ENCODE measurements at regions of chr1 and their contacts with region 1.

Region 1: GRCh38 chr1:173420330-173420806 is 56.8 kb upstream of the PRDX6 start:
- DNase-seq: peak; percentile 78
- H3K4me3 Mint-ChIP-seq: peak overlapping the region; percentile 29
- H3K27ac Mint-ChIP-seq: no peak overlapping the region
- H3K4me1 Mint-ChIP-seq: peaks cover 33% of the 10 kb centered on the region
- H3K27me3 Mint-ChIP-seq: no peaks in the 10 kb centered on the region
- CTCF ChIP-seq: peak; percentile 87

Region 2: DNA sequence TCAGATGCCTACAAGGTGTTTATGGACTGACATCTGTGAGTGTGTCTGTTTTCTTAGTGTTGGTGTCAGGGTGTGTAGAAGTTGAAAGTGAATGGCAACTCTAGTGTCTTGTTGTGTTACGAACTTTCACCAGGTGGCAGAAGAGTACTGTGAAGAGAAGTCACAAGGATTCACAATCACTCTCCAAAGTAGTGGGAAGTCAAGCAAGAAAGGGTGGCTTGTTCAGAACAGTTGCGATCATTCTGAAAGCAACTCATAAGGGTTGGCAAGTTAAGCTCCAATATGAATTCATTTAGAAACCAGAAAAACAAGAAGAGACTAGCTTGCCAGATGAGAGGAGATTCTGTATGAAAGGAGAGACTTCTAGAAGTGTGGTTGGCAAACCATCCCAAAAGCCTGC is 675.4 kb before region 1 on chr1:
- CTCF ChIA-PET with region 1: interaction called, 3 read pairs
- intact Hi-C with region 1: loop called (anchors 2 kb)
- DNase-seq: peak; percentile 64
- H3K4me3 Mint-ChIP-seq: peak overlapping the region; percentile 17
- H3K27ac Mint-ChIP-seq: peak overlapping the region; percentile 80
- H3K4me1 Mint-ChIP-seq: peaks cover 33% of the 10 kb centered on the region
- H3K27me3 Mint-ChIP-seq: no peaks in the 10 kb centered on the region
- CTCF ChIP-seq: peak; percentile 66

Region 3: DNA sequence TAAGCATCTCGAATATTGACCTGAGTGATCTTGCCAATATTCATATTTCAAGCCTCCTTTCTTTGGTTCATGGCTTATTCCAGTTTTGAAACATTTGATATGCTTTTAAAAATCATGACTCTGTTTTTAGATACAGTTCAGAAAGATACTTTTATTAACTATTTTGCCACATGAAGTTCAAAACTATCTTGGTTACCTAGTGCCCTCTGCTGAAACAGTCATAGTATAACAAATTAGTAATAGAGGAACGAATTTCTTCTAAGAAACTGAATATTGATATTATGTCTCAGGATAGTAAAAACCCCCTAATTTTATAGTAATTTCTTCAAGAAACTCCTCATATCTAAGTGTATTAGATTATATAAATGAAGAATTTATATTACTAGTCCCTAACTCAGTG is 654.4 kb after region 1 on chr1:
- CTCF ChIA-PET with region 1: no interaction called
- intact Hi-C with region 1: loop called (anchors 1 kb)
- DNase-seq: no peak
- H3K4me3 Mint-ChIP-seq: no peak overlapping the region
- H3K27ac Mint-ChIP-seq: no peak overlapping the region
- H3K4me1 Mint-ChIP-seq: no peaks in the 10 kb centered on the region
- H3K27me3 Mint-ChIP-seq: no peaks in the 10 kb centered on the region
- CTCF ChIP-seq: peak; percentile 11

Region 4: DNA sequence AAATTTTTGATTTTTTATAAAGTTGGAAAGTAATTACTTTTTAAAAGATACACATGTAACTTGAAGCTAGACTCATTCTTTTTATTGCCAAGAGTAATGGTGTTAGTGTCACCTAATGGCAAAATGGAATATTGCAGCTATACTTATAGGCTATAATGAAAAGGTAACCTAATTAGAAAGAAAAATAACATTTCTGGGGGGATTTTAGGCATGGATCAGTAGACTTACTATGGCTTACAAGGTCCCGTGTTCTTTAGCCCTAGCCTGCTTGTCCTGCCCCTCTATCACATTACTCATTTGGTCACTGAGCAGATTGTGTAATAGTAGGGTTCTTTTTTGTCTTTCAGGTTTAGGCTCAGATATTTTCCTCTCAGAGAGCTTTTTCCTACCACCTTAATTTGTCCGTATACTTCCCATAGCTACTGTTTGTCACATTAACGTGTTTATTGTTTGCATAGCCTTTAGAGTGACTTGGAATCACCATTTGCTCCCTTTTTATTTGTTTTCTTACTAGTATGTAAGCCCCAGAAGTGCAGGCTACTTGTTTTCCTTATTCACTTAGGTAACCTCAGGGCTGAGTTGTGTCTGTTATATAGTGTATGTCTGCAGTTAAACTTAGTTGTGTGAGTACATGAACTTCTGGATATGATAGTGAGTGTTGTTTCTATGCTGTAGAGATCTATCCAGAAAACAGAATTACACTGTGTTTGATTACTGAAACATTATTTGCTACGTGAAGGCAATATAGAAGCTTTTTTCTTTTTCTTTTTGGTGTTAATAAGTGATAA is 797.6 kb after region 1 on chr1:
- CTCF ChIA-PET with region 1: no interaction called
- intact Hi-C with region 1: loop called (anchors 5 kb)
- DNase-seq: no peak
- H3K4me3 Mint-ChIP-seq: no peak overlapping the region
- H3K27ac Mint-ChIP-seq: no peak overlapping the region
- H3K4me1 Mint-ChIP-seq: no peaks in the 10 kb centered on the region
- H3K27me3 Mint-ChIP-seq: no peaks in the 10 kb centered on the region
- CTCF ChIP-seq: peak; percentile 57

Region 5: DNA sequence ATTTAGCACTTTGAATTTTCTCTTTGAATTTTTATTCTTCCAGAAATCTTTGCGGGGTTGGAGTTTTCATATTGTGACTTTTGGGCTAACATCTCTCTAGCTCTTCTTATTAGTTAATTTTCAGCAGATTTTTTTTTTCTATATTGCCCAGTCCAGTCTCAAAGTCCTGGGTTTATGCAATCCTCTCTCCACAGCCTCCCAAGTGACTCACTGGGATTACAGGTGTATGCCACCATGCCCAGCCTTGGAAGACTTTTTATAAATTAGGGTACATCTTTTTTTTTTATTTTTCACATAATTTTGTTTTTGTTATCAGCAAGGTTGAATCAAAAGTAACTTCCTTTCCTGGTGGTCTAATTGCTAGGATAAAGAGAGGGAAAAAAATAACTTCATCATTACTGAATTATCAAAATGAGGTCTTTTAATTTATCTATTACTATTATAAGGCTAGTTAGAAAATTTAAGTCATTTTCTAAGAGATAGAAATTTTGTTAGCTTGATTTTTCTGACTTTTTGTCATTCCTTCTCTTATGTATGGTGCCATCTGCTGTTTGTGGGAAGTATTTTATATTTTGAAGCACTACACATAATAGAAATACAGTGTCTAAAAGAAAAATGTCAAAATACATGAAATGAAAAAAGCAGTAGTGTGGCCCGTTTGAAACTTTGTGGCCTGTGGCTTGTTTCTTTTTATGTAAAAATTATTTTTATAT is 1306.0 kb after region 1 on chr1:
- CTCF ChIA-PET with region 1: no interaction called
- intact Hi-C with region 1: loop called (anchors 5 kb)
- DNase-seq: no peak
- H3K4me3 Mint-ChIP-seq: no peak overlapping the region
- H3K27ac Mint-ChIP-seq: no peak overlapping the region
- H3K4me1 Mint-ChIP-seq: no peaks in the 10 kb centered on the region
- H3K27me3 Mint-ChIP-seq: no peaks in the 10 kb centered on the region
- CTCF ChIP-seq: peak; percentile 56

Region 6: GRCh38 chr1:174743654-174744561 is 1323.5 kb after region 1 on chr1:
- CTCF ChIA-PET with region 1: no interaction called
- intact Hi-C with region 1: loop called (anchors 5 kb)
- DNase-seq: no peak
- H3K4me3 Mint-ChIP-seq: no peak overlapping the region
- H3K27ac Mint-ChIP-seq: no peak overlapping the region
- H3K4me1 Mint-ChIP-seq: no peaks in the 10 kb centered on the region
- H3K27me3 Mint-ChIP-seq: no peaks in the 10 kb centered on the region
- CTCF ChIP-seq: peak; percentile 56